Left colon (tissue), 2 donors: ENCODE measurements at regions of chr2 and their contacts with region 1.

Region 1: DNA sequence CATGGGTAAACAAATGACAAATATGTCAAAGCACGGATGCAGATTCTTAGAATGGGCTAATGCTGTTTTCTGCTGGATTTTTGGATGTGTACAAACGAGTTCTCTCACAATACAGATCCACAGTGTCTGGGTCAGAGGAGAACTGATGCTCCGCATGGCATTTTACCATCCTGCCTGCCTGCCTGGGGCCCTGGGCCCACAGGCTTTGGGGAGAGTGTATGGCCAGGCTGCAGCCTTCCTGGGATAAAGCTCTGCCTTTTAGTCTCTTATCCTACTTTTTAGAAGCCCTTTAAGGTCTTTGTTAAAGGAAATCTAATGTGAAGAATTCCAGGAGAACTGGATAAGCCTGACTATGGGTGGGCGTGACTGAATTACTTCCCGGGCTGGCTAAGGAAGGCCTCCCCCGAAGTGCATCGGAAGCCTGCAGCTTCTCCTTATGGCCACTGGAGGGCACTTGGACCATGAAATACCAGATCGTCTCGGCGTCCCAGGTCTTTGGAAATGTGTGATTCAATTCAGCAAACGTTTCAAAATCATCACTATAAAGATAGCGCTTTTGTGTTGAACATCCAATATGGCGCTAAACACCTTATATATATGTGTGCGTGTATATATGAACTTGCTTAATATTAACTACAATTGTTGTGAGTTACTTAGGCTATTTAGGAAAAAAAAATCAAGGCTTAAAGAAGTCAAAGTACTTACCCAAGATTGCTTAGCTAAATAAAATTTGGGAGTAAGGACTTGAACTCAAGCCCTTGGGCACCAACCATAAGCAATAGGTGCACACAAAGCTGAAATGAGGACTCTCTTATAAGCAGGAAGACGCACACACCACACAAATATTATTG is 15.2 kb upstream of the DNPEP start:
- DNase-seq: peak; percentile 57 to 67
- ATAC-seq: peak; percentile 43

Region 2: DNA sequence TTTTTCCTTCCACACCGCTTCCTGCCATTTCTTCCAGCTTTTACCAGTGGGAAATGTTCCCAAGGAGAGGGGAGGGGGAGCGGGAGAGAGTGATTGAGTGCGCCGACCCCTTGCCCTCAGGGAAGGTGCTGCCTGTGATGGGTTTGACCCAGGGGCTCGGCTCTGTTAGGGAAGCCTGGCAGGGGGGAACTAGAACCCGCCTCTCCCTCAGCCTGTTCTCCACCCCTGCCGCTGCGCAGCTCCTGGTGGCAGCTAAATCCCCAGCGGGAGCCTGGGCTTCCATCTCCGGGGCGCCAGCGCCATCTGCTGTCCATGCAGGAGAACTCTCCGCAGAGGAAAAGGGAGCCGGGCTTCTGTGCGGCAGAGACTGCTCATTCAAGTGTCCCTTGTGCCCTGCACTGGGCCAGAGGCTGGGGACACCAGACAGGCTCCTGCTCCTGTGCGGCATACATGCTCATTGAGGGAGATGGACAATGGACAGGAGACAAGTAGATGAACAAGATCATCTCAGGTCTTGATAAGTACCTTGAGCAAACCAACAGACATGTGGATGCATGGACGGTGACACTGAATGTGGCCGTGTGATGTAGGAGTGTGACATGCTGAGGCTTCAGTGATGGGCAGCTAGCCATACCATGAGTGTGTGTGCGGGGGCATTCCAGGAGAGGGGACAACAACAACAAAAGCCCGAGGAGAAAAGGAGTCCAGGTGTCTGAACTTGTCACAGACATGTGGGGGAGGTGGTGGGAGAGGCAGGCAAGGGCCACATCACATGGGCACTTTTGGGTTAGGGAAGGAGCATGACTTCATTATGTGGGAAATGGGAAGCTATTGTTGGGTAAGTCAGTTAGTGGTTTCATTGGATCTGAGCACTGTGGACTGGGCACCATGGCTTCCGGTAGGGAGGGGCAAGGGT is 127.4 kb after region 1 on chr2:
- intact Hi-C with region 1: loop called (anchors 2 to 10 kb)
- DNase-seq: peak; percentile 78
- ATAC-seq: peak; percentile 96